Mammary epithelial cell (primary cell): ENCODE measurements at regions of chr2 and their contacts with region 1.

Region 1: GRCh38 chr2:207254591-207255464 is 89.1 kb upstream of the KLF7 start:
- DNase-seq: peak; percentile 54
- H3K4me3 ChIP-seq: peak overlapping the region in 2 of 3 experiments; percentile 8 to 15
- H3K27ac ChIP-seq: peak overlapping the region; percentile 86
- H3K4me1 ChIP-seq: peaks cover 90% of the 10 kb centered on the region
- H3K27me3 ChIP-seq: no peaks in the 10 kb centered on the region
- CTCF ChIP-seq: no peak

Region 2: DNA sequence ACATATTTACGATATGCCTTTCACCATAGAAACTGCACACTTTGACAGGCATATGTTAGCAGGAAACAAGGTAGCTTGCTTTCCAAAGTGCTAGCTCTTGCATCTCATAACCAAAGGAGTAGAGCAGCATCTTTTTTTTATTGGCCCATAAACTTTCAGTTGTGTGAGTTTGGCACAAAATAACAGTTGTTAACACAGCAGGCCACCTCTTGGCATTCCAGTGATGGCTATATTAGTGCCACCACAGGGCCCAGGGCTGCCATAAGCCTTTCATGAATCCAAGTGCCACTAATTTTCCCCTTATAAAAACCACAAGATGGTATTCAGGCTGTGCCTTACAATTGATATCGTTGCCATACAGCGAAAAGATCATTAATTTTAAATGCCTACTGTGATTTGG is 48.8 kb before region 1 on chr2:
- CTCF ChIA-PET with region 1: no interaction called
- dilution Hi-C with region 1: no loop called
- in situ Hi-C with region 1: no loop called
- intact Hi-C with region 1: no loop called
- DNase-seq: no peak
- H3K4me3 ChIP-seq: no peak overlapping the region
- H3K27ac ChIP-seq: no peak overlapping the region
- H3K4me1 ChIP-seq: no peaks in the 10 kb centered on the region
- H3K27me3 ChIP-seq: no peaks in the 10 kb centered on the region
- CTCF ChIP-seq: no peak

Region 3: DNA sequence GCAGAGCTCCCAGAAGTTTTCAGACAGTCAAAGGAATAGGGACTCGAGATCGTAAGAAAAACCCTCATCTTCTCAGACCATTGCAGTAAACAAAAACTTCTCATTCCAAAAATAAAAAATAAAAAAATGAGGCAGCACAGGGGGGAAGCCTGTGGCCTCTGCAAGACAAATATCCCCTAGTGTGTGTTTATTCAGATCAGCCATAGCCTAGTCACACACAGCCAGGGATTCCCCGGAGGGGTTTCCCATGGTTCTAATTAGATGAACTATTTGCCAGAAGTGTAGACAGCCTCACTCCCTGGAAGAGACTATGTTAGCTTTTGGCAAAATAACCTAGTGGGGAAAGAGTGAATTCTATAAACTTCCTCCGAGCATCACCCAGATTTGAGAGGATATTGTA is 33.8 kb after region 1 on chr2:
- CTCF ChIA-PET with region 1: no interaction called
- dilution Hi-C with region 1: no loop called
- in situ Hi-C with region 1: no loop called
- intact Hi-C with region 1: no loop called
- DNase-seq: peak; percentile 13
- H3K4me3 ChIP-seq: no peak overlapping the region
- H3K27ac ChIP-seq: no peak overlapping the region
- H3K4me1 ChIP-seq: peaks cover 18% of the 10 kb centered on the region
- H3K27me3 ChIP-seq: no peaks in the 10 kb centered on the region
- CTCF ChIP-seq: no peak

Region 4: DNA sequence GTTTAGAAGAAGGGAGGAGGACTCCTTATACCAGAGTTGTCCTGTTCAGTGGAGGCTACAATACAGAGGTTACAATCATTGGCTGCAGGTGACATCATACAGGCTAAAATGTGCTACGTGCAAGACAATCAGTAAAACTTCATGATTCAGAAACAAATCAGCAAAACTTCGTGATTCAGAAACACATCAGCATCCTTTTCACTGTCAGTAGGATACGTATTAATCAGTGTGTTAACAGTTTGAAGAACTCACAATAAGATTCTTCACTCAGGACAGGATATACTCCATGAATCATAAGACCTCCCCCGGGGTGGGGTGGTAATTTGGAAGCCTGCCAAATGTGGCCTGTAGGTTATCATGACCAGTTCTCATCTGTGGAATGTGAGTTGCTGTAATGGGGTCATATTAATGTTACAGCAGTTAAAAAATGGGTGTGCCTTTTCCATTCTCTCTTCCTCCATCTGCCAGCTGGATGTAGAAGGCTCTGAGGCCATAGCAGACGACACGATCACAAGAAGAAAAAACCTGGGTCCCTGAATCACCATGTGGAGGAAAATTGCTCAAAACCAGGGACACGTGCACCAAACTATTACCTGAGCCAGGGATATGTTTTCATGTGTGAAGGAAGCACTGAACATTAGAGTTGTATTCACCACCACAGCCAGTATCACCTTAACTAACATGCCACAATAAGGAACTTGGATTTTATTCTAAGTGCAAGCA is 140.1 kb after region 1 on chr2:
- CTCF ChIA-PET with region 1: no interaction called
- dilution Hi-C with region 1: no loop called
- in situ Hi-C with region 1: no loop called
- intact Hi-C with region 1: loop called (anchors 1 kb)
- DNase-seq: peak; percentile 100
- H3K4me3 ChIP-seq: no peak overlapping the region
- H3K27ac ChIP-seq: peak overlapping the region; percentile 98
- H3K4me1 ChIP-seq: peaks cover 36% of the 10 kb centered on the region
- H3K27me3 ChIP-seq: no peaks in the 10 kb centered on the region
- CTCF ChIP-seq: no peak